CD4-positive, alpha-beta T cell (primary cell): ENCODE measurements at regions of chr1 and their contacts with region 1.

Region 1: DNA sequence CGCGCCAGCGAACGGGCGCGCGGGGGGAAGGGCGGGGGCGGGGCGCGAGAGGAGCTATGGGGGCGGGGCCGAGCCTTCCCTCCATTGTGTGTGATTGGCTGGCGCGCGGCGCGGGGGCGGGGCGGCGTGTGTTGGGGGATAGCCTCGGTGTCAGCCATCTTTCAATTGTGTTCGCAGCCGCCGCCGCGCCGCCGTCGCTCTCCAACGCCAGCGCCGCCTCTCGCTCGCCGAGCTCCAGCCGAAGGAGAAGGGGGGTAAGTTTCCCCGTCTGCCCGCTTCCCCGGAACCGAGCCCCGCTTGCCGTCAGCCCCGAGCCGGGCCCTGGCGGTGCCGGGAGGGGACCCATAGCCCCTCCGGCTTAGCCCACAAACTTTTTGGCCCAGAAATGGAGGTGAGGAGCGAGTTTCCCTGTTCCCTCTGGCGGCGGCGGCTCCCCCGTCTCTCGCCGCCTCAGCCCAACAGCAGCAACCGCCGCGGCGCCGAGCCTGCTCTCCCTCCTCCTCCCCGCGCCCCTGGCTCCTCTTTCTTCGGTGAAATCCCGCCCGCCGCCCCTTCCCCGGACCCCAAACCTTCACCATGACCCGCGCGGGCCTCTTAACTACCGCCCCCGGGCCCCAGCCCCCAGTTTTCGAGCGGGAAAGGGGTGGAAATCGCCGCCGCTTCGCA is at the start of gene H3-3A:
- DNase-seq: peak; percentile 97 to 100 (median 98)
- ATAC-seq: peak; percentile 78
- H3K4me3 ChIP-seq: peak within 1 kb of the TSS; percentile 90
- H3K4me3 Mint-ChIP-seq: peak within 1 kb of the TSS; percentile 100
- H3K27ac ChIP-seq: peak within 1 kb of the TSS; percentile 89 to 97
- H3K27ac Mint-ChIP-seq: peak within 1 kb of the TSS; percentile 99
- H3K4me1 ChIP-seq: peaks cover 24% of the 10 kb centered on the region
- H3K4me1 Mint-ChIP-seq: peaks cover 62% of the 10 kb centered on the region
- H3K27me3 ChIP-seq: no peaks in the 10 kb centered on the region
- H3K27me3 Mint-ChIP-seq: no peaks in the 10 kb centered on the region
- CTCF ChIP-seq: no peak
- total RNA-seq, gene H3-3A: 372 to 380 TPM

Region 2: GRCh38 chr1:225474986-225475820 is 587.5 kb before region 1 on chr1:
- CTCF ChIA-PET with region 1: interaction called, 4 read pairs
- POLR2A ChIA-PET with region 1: no interaction called
- intact Hi-C with region 1: loop called in 1 of 2 experiments (anchors 5 kb)
- DNase-seq: peak; percentile 27 to 88 (median 60)
- ATAC-seq: peak; percentile 85
- H3K4me3 ChIP-seq: no peak overlapping the region
- H3K4me3 Mint-ChIP-seq: no peak overlapping the region
- H3K27ac ChIP-seq: no peak overlapping the region
- H3K27ac Mint-ChIP-seq: peak overlapping the region; percentile 39
- H3K4me1 ChIP-seq: peaks cover 55% of the 10 kb centered on the region
- H3K4me1 Mint-ChIP-seq: peaks cover 42% of the 10 kb centered on the region
- H3K27me3 ChIP-seq: no peaks in the 10 kb centered on the region
- H3K27me3 Mint-ChIP-seq: no peaks in the 10 kb centered on the region
- CTCF ChIP-seq: peak; percentile 100

Region 3: DNA sequence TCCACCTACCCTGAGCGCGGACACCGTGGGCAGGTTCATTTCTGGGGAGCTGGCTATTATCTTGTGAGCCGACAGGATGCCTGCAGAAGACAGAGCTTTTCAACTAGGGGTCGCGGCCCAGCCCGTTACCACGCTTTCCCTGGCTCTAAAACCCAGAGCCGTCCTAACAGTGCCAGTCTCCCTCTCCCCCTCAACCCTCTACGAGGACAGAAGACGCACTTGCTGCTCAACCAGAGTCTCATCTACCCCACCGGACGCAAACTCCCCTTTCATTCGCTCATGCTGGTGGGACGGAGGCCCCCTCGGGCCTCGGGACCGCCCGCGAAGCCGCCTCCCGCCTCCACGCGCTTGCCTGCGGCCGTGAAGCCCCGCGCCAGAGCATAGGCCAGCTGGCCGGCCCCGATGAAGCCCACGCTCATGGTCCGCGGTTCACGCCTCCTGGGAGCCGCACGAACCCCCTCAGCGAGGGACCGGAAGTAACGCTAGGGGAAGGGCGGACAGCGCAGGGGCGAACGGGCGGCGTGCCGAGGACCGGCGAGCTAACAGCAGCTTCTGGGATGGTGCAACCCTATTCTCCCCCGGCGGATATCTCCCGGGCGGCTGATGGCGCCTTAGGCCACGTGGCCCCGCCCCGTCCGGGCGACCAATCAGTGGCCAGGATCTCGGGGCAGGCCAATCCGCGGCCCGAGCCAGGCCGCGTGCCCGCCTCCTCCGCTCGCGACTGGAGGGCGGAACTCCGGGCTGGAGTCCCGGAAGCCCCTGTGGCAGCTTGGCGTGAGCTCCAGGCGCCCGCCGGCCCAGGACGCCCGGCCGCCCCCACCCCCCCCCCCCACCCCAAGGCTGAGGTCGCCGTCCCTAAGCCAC is 138.8 kb before region 1 on chr1 and contains the start of gene PYCR2:
- CTCF ChIA-PET with region 1: no interaction called
- POLR2A ChIA-PET with region 1: interaction called, 14 read pairs
- intact Hi-C with region 1: loop called in 1 of 2 experiments (anchors 5 kb)
- DNase-seq: peak; percentile 87 to 98 (median 93)
- ATAC-seq: peak; percentile 98
- H3K4me3 ChIP-seq: peak within 1 kb of the TSS; percentile 95
- H3K4me3 Mint-ChIP-seq: peak within 1 kb of the TSS; percentile 95
- H3K27ac ChIP-seq: peak within 1 kb of the TSS; percentile 79 to 89
- H3K27ac Mint-ChIP-seq: peak within 1 kb of the TSS; percentile 98
- H3K4me1 ChIP-seq: peaks cover 74% of the 10 kb centered on the region
- H3K4me1 Mint-ChIP-seq: peaks cover 54% of the 10 kb centered on the region
- H3K27me3 ChIP-seq: no peaks in the 10 kb centered on the region
- H3K27me3 Mint-ChIP-seq: no peaks in the 10 kb centered on the region
- CTCF ChIP-seq: no peak
- total RNA-seq, gene PYCR2: 24.1 to 26.2 TPM

Region 4: DNA sequence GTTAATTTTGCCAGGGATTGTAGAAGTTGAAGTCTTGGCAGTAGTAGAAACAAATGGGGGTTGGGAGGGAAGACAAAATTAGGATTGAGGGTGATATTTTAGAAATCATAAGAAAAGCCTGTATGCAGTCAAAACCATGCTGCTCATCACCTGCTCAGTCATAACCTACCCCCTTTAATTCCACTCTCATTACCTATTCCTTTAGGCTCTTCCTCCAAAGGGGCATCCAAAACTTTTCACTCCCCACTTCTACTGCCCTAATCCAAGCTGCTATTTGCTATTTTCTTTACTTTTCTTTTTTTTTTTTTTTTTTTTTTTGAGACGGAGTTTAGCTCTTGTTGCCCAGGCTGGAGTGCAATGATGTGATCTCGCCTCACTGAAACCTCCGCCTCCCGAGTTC is 11.4 kb after region 1 on chr1:
- CTCF ChIA-PET with region 1: interaction called, 21 read pairs
- POLR2A ChIA-PET with region 1: interaction called, 33 read pairs
- intact Hi-C with region 1: no loop called
- DNase-seq: no peak
- ATAC-seq: peak; percentile 15
- H3K4me3 ChIP-seq: no peak overlapping the region
- H3K4me3 Mint-ChIP-seq: no peak overlapping the region
- H3K27ac ChIP-seq: no peak overlapping the region
- H3K27ac Mint-ChIP-seq: peak overlapping the region; percentile 21
- H3K4me1 ChIP-seq: peaks cover 12% of the 10 kb centered on the region
- H3K4me1 Mint-ChIP-seq: peaks cover 43% of the 10 kb centered on the region
- H3K27me3 ChIP-seq: no peaks in the 10 kb centered on the region
- H3K27me3 Mint-ChIP-seq: no peaks in the 10 kb centered on the region
- CTCF ChIP-seq: no peak

Region 5: GRCh38 chr1:226186124-226187018 is 123.7 kb after region 1 on chr1 and contains the start of gene ACBD3:
- CTCF ChIA-PET with region 1: no interaction called
- POLR2A ChIA-PET with region 1: interaction called, 28 read pairs
- intact Hi-C with region 1: loop called in 1 of 2 experiments (anchors 5 kb)
- DNase-seq: peak; percentile 73 to 94 (median 79)
- ATAC-seq: peak; percentile 98
- H3K4me3 ChIP-seq: peak within 1 kb of the TSS; percentile 93
- H3K4me3 Mint-ChIP-seq: peak within 1 kb of the TSS; percentile 98
- H3K27ac ChIP-seq: peak within 1 kb of the TSS; percentile 70 to 80
- H3K27ac Mint-ChIP-seq: peak within 1 kb of the TSS; percentile 89
- H3K4me1 ChIP-seq: peaks cover 38% of the 10 kb centered on the region
- H3K4me1 Mint-ChIP-seq: peaks cover 36% of the 10 kb centered on the region
- H3K27me3 ChIP-seq: no peaks in the 10 kb centered on the region
- H3K27me3 Mint-ChIP-seq: no peaks in the 10 kb centered on the region
- CTCF ChIP-seq: no peak
- total RNA-seq, gene ACBD3: 26.5 to 28.3 TPM